MCF 10A (cell line): ENCODE measurements at regions of chr7 and their contacts with region 1.

Region 1: GRCh38 chr7:40057292-40057691 is 77.1 kb downstream of the MPLKIP start:
- DNase-seq: peak; percentile 51
- H3K4me3 Mint-ChIP-seq: no peak overlapping the region
- H3K27ac Mint-ChIP-seq: peak overlapping the region; percentile 1
- H3K4me1 Mint-ChIP-seq: peaks cover 17% of the 10 kb centered on the region
- H3K27me3 Mint-ChIP-seq: no peaks in the 10 kb centered on the region
- CTCF ChIP-seq: no peak

Region 2: GRCh38 chr7:39958038-39958437 is 99.3 kb before region 1 on chr7:
- CTCF ChIA-PET with region 1: interaction called, 12 read pairs
- POLR2A ChIA-PET with region 1: interaction called, 4 read pairs
- intact Hi-C with region 1: no loop called
- DNase-seq: no peak
- H3K4me3 Mint-ChIP-seq: no peak overlapping the region
- H3K27ac Mint-ChIP-seq: no peak overlapping the region
- H3K4me1 Mint-ChIP-seq: peaks cover 16% of the 10 kb centered on the region
- H3K27me3 Mint-ChIP-seq: no peaks in the 10 kb centered on the region
- CTCF ChIP-seq: no peak

Region 3: GRCh38 chr7:40033826-40034225 is 23.5 kb before region 1 on chr7:
- CTCF ChIA-PET with region 1: interaction called, 11 read pairs
- POLR2A ChIA-PET with region 1: no interaction called
- intact Hi-C with region 1: no loop called
- DNase-seq: no peak
- H3K4me3 Mint-ChIP-seq: no peak overlapping the region
- H3K27ac Mint-ChIP-seq: no peak overlapping the region
- H3K4me1 Mint-ChIP-seq: peaks cover 11% of the 10 kb centered on the region
- H3K27me3 Mint-ChIP-seq: no peaks in the 10 kb centered on the region
- CTCF ChIP-seq: no peak

Region 4: GRCh38 chr7:40041456-40041855 is 15.8 kb before region 1 on chr7:
- CTCF ChIA-PET with region 1: interaction called, 11 read pairs
- POLR2A ChIA-PET with region 1: interaction called, 3 read pairs
- intact Hi-C with region 1: no loop called
- DNase-seq: no peak
- H3K4me3 Mint-ChIP-seq: no peak overlapping the region
- H3K27ac Mint-ChIP-seq: no peak overlapping the region
- H3K4me1 Mint-ChIP-seq: no peaks in the 10 kb centered on the region
- H3K27me3 Mint-ChIP-seq: no peaks in the 10 kb centered on the region
- CTCF ChIP-seq: no peak

Region 5: GRCh38 chr7:40429826-40430225 is 372.5 kb after region 1 on chr7:
- CTCF ChIA-PET with region 1: no interaction called
- POLR2A ChIA-PET with region 1: no interaction called
- intact Hi-C with region 1: no loop called
- DNase-seq: no peak
- H3K4me3 Mint-ChIP-seq: no peak overlapping the region
- H3K27ac Mint-ChIP-seq: no peak overlapping the region
- H3K4me1 Mint-ChIP-seq: peaks cover 7% of the 10 kb centered on the region
- H3K27me3 Mint-ChIP-seq: no peaks in the 10 kb centered on the region
- CTCF ChIP-seq: no peak

Region 6: GRCh38 chr7:40507166-40507565 is 449.9 kb after region 1 on chr7:
- CTCF ChIA-PET with region 1: no interaction called
- POLR2A ChIA-PET with region 1: no interaction called
- intact Hi-C with region 1: no loop called
- DNase-seq: peak; percentile 13
- H3K4me3 Mint-ChIP-seq: no peak overlapping the region
- H3K27ac Mint-ChIP-seq: no peak overlapping the region
- H3K4me1 Mint-ChIP-seq: no peaks in the 10 kb centered on the region
- H3K27me3 Mint-ChIP-seq: no peaks in the 10 kb centered on the region
- CTCF ChIP-seq: no peak